Panc1 (cell line): ENCODE measurements at regions of chr6 and their contacts with region 1.

Region 1: GRCh38 chr6:107259951-107260350 is 144.6 kb upstream of the BEND3 start:
- DNase-seq: no peak
- ATAC-seq: no peak
- H3K4me3 ChIP-seq: no peak overlapping the region
- H3K27ac ChIP-seq: no peak overlapping the region
- H3K4me1 ChIP-seq: no peaks in the 10 kb centered on the region
- H3K27me3 ChIP-seq: no peaks in the 10 kb centered on the region
- CTCF ChIP-seq: no peak

Region 2: GRCh38 chr6:107235511-107235910 is 24.4 kb before region 1 on chr6:
- CTCF ChIA-PET with region 1: no interaction called
- POLR2A ChIA-PET with region 1: no interaction called
- in situ Hi-C with region 1: no loop called
- intact Hi-C with region 1: no loop called
- DNase-seq: no peak
- ATAC-seq: no peak
- H3K4me3 ChIP-seq: no peak overlapping the region
- H3K27ac ChIP-seq: no peak overlapping the region
- H3K4me1 ChIP-seq: no peaks in the 10 kb centered on the region
- H3K27me3 ChIP-seq: no peaks in the 10 kb centered on the region
- CTCF ChIP-seq: no peak

Region 3: GRCh38 chr6:107290481-107290880 is 30.5 kb after region 1 on chr6:
- CTCF ChIA-PET with region 1: interaction called, 12 read pairs
- POLR2A ChIA-PET with region 1: no interaction called
- in situ Hi-C with region 1: no loop called
- intact Hi-C with region 1: no loop called
- DNase-seq: no peak
- ATAC-seq: peak; percentile 85
- H3K4me3 ChIP-seq: peak overlapping the region in 1 of 2 experiments; percentile 19; a peak in 3 of 4 replicates
- H3K27ac ChIP-seq: peak overlapping the region; percentile 51; the same call in 1 of the 2 replicates
- H3K4me1 ChIP-seq: peaks cover 8% of the 10 kb centered on the region
- H3K27me3 ChIP-seq: no peaks in the 10 kb centered on the region
- CTCF ChIP-seq: no peak